CD4-positive, alpha-beta memory T cell (primary cell): ENCODE measurements at regions of chr17 and their contacts with region 1.

Region 1: DNA sequence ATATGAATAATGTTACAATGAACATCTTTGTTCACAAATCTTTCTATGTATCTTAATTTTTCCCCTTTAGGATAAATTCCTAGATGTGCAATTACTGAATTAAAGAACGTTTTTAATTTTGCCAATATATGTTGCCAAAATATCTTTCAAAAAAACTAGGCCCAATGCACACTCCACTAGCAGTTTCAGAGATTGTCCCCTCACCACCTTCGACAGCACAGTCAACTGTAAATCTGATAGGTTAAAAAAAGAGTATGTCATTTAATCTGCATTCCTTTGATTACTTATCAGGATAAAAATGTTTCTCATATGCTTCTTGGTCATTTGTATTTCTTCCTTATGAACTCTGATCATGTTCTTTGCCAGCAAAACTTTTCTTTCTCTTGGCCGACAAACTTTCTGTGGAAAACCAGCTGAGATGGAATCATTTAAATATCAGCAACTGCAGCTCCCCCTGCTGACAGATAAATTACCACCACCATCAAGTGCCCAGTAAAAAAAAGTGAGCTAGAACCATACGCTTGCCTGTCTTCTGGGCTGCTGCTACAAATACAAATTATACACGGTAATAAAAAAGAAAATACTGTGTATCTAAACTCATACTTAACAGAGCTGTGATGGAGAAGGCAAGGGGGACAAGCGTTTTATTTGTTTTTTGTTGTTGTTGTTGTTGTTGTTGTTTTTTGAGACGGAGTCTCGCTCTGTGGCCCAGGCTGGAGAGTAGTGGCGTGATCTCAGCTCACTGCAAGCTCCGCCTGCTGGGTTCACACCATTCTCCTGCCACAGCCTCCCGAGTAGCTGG is 19.6 kb upstream of the KANSL1 start:
- DNase-seq: peak; percentile 73 to 80 (median 76)
- H3K4me3 ChIP-seq: no peak overlapping the region
- H3K4me3 Mint-ChIP-seq: peak overlapping the region in 2 of 8 donors; percentile 1 to 15
- H3K27ac ChIP-seq: no peak overlapping the region
- H3K27ac Mint-ChIP-seq: peak overlapping the region; percentile 9 to 92 (median 54)
- H3K4me1 ChIP-seq: peaks cover 5% of the 10 kb centered on the region
- H3K4me1 Mint-ChIP-seq: peaks cover 19 to 43% (median 26%) of the 10 kb centered on the region in 4 donors
- H3K27me3 ChIP-seq: no peaks in the 10 kb centered on the region
- H3K27me3 Mint-ChIP-seq: no peaks in the 10 kb centered on the region

Region 2: GRCh38 chr17:46002311-46002972 is 210.4 kb before region 1 on chr17:
- CTCF ChIA-PET with region 1: interaction called, 119 read pairs
- POLR2A ChIA-PET with region 1: interaction called, 3 read pairs
- intact Hi-C with region 1: loop called (anchors 1 kb)
- DNase-seq: peak; percentile 67 to 78 (median 72)
- H3K4me3 ChIP-seq: no peak overlapping the region
- H3K4me3 Mint-ChIP-seq: no peak overlapping the region
- H3K27ac ChIP-seq: no peak overlapping the region
- H3K27ac Mint-ChIP-seq: no peak overlapping the region
- H3K4me1 ChIP-seq: peaks cover 5% of the 10 kb centered on the region
- H3K4me1 Mint-ChIP-seq: no peaks in the 10 kb centered on the region
- H3K27me3 ChIP-seq: no peaks in the 10 kb centered on the region
- H3K27me3 Mint-ChIP-seq: peaks cover 0 to 2% of the 10 kb centered on the region in 2 donors

Region 3: GRCh38 chr17:46044286-46044928 is 168.4 kb before region 1 on chr17:
- CTCF ChIA-PET with region 1: interaction called, 112 read pairs
- POLR2A ChIA-PET with region 1: interaction called, 11 read pairs
- intact Hi-C with region 1: loop called (anchors 1 kb)
- DNase-seq: peak; percentile 42 to 65 (median 50)
- H3K4me3 ChIP-seq: no peak overlapping the region
- H3K4me3 Mint-ChIP-seq: peak overlapping the region in 1 of 8 donors; percentile 13
- H3K27ac ChIP-seq: no peak overlapping the region
- H3K27ac Mint-ChIP-seq: peak overlapping the region; percentile 4 to 94 (median 69)
- H3K4me1 ChIP-seq: no peaks in the 10 kb centered on the region
- H3K4me1 Mint-ChIP-seq: peaks cover 9 to 18% (median 14%) of the 10 kb centered on the region in 4 donors
- H3K27me3 ChIP-seq: no peaks in the 10 kb centered on the region
- H3K27me3 Mint-ChIP-seq: no peaks in the 10 kb centered on the region

Region 4: GRCh38 chr17:46139432-46140210 is 73.2 kb before region 1 on chr17:
- CTCF ChIA-PET with region 1: interaction called, 19 read pairs
- POLR2A ChIA-PET with region 1: interaction called, 3 read pairs
- intact Hi-C with region 1: no loop called
- DNase-seq: no peak
- H3K4me3 ChIP-seq: no peak overlapping the region
- H3K4me3 Mint-ChIP-seq: peak overlapping the region in 7 of 8 donors; percentile 6 to 70 (median 34)
- H3K27ac ChIP-seq: no peak overlapping the region
- H3K27ac Mint-ChIP-seq: peak overlapping the region in 5 of 7 donors; percentile 53 to 73 (median 59)
- H3K4me1 ChIP-seq: peaks cover 95% of the 10 kb centered on the region
- H3K4me1 Mint-ChIP-seq: peaks cover 75 to 98% (median 88%) of the 10 kb centered on the region in 4 donors
- H3K27me3 ChIP-seq: no peaks in the 10 kb centered on the region
- H3K27me3 Mint-ChIP-seq: no peaks in the 10 kb centered on the region

Region 5: DNA sequence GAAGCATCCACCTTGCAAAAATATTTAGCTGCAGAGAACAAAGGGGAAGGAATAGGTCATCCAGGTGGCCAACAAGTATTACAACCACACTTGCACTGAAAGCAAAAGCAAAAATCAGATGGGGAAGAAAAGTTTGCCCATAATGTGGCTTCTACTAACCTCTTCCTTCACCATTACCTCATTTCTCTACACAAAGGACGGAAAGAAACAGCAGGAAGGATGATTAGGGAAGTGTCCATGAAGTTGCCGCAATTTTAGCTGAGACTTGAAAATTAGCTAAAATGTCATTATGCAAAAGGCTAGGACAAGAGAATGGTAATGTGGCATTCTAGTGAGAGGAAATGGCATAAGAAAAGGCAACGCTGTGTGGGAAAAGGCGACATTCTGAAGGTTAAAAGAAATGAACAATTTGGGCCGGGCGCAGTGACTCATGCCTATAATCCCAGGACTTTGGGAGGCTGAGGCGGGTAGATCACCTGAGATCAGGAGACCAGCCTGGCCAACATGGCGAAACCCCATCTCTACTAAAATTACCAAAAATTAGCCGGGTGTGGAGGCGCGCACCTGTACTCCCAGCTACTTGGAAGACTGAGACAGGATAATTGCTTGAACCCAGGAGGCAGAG is 33.3 kb before region 1 on chr17:
- CTCF ChIA-PET with region 1: interaction called, 41 read pairs
- POLR2A ChIA-PET with region 1: interaction called, 4 read pairs
- intact Hi-C with region 1: no loop called
- DNase-seq: no peak
- H3K4me3 ChIP-seq: no peak overlapping the region
- H3K4me3 Mint-ChIP-seq: peak overlapping the region; percentile 29 to 85 (median 72)
- H3K27ac ChIP-seq: no peak overlapping the region
- H3K27ac Mint-ChIP-seq: peak overlapping the region; percentile 11 to 86 (median 70)
- H3K4me1 ChIP-seq: peaks cover 92% of the 10 kb centered on the region
- H3K4me1 Mint-ChIP-seq: peaks cover 67 to 96% (median 85%) of the 10 kb centered on the region in 4 donors
- H3K27me3 ChIP-seq: no peaks in the 10 kb centered on the region
- H3K27me3 Mint-ChIP-seq: no peaks in the 10 kb centered on the region

Region 6: DNA sequence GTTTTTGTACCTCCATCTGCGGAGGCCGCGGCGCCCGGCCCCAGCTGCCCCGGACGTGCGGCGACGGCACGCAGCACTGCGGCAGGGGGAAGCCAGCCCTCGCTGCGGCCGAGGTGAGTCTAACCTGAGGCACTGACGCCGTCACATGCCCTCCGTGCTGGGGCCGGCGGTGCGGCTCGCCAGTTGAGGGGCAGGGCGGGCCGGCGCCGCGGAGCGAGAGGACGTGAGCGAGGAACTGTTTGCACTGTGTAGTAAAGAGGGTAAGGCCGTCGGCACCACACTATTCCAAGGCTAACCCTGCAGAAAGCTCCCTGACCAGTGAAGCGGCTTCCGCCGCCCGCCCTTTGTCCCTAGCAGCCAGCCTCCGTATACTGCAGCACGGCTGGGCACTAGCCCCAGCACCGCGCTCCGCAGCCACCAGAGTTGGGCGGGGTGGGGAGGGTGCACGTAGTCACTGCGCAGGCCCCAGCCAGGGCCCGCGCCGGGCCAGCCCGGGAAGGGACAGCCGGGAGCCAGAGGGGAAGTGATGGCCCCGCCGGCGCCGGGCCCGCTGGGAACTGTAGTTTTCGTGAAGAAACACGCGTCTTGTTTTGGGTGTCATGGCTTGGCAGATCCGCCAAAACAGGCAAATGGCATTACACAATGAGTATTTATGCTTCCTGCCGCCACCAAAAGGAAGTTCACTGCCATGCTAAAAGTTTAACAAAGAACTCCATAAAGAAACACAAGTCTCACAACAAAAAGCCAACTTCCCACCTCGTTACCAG is 19.0 kb before region 1 on chr17:
- CTCF ChIA-PET with region 1: interaction called, 93 read pairs
- POLR2A ChIA-PET with region 1: interaction called, 76 read pairs
- intact Hi-C with region 1: loop called (anchors 1 kb)
- DNase-seq: peak; percentile 89 to 97 (median 94)
- H3K4me3 ChIP-seq: peak overlapping the region; percentile 40 to 93
- H3K4me3 Mint-ChIP-seq: peak overlapping the region; percentile 74 to 89 (median 86)
- H3K27ac ChIP-seq: peak overlapping the region; percentile 94
- H3K27ac Mint-ChIP-seq: peak overlapping the region; percentile 88 to 99 (median 98)
- H3K4me1 ChIP-seq: peaks cover 65% of the 10 kb centered on the region
- H3K4me1 Mint-ChIP-seq: peaks cover 35 to 80% (median 55%) of the 10 kb centered on the region in 4 donors
- H3K27me3 ChIP-seq: no peaks in the 10 kb centered on the region
- H3K27me3 Mint-ChIP-seq: no peaks in the 10 kb centered on the region